ENCODE measurements at regions of chr1 and their contacts with region 1.

Region 1: GRCh38 chr1:91165033-91165654 is 143.3 kb upstream of the ZNF644 start:
- DNase-seq: peak; percentile 79 to 91 (median 84)
- ATAC-seq: peak; percentile 99
- H3K4me3 ChIP-seq: no peak overlapping the region
- H3K27ac ChIP-seq: no peak overlapping the region
- H3K4me1 ChIP-seq: no peaks in the 10 kb centered on the region
- H3K27me3 ChIP-seq: peaks cover 6 to 45% of the 10 kb centered on the region in 2 experiments
- CTCF ChIP-seq: peak; percentile 92 to 95 (median 94)
- EP300 ChIP-seq: no peak
- POLR2A ChIP-seq: no peak
- RAD21 ChIP-seq: peak; percentile 84 to 91

Region 2: DNA sequence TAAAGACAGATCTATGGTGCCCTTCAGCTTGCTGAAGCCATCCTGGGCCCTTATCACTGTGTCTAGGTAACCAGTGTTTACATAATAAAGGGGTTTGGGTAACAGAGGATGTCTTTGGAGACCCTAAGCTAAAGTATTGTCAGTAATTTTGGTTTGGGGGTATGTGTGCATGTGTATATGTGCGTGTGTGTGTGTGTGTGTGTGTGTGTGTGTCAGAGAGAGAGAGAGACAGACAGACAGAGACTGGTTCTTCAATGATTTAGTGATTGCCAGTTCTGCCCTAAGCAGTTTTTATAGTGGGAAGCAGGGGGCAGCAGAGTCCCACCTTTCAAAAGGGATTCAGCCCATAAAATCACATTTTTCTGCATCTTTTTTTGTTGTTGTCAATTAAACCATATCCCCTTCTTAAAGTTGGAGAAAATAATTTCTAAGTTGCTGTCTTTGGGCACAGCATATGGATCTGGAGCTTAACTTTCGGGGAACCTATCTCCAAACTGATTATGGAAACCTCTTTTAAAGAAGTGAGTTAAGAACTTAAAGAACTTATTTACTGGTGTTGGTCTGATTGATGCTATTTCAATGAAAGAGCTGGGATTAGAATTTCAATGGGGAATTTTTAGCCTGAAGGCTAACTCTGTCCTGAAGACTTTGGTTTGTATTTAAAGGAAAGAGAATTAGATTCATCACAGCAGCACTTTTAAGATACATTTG is 1119.1 kb before region 1 on chr1:
- CTCF ChIA-PET with region 1: interaction called, 6 read pairs
- POLR2A ChIA-PET with region 1: no interaction called
- in situ Hi-C with region 1: no loop called
- intact Hi-C with region 1: loop called (anchors 10 kb)
- DNase-seq: peak; percentile 33 to 54 (median 43)
- ATAC-seq: peak; percentile 89
- H3K4me3 ChIP-seq: no peak overlapping the region
- H3K27ac ChIP-seq: no peak overlapping the region
- H3K4me1 ChIP-seq: no peaks in the 10 kb centered on the region
- H3K27me3 ChIP-seq: peaks cover 12 to 20% of the 10 kb centered on the region in 2 experiments
- CTCF ChIP-seq: peak; percentile 64 to 86 (median 78)
- EP300 ChIP-seq: no peak
- POLR2A ChIP-seq: no peak
- RAD21 ChIP-seq: peak; percentile 51 to 80

Region 3: DNA sequence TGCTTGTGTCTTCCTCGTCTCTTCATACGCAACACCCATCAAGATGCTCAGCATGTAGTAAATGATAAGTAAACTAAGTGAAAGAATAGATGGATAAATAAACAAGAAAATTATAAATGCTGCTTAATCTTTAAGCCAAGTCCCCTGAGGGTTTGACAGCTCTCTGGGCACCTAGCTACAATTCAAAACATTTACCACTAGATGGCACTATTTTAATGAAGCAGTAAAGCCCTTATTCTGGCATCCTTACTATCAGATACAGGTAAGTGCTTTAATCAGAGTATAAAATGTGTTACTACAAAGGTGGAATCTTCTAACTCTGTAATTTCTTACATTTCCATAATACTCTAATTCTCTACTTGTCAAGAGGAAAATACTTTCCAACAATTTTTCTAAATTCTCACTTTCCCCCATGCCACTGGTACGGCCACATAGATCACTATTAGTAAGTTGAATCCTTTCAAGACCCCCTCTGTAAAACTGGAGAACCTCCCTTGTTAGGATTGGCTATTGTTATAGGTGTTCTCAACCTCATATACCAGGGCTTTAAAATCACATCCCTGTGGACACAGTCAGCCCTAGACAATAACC is 585.8 kb before region 1 on chr1:
- CTCF ChIA-PET with region 1: interaction called, 3 read pairs
- POLR2A ChIA-PET with region 1: no interaction called
- in situ Hi-C with region 1: no loop called
- intact Hi-C with region 1: loop called (anchors 1 kb)
- DNase-seq: peak; percentile 46 to 61 (median 60)
- ATAC-seq: peak; percentile 84
- H3K4me3 ChIP-seq: no peak overlapping the region
- H3K27ac ChIP-seq: no peak overlapping the region
- H3K4me1 ChIP-seq: no peaks in the 10 kb centered on the region
- H3K27me3 ChIP-seq: no peaks in the 10 kb centered on the region; a peak in 1 of 5 replicates
- CTCF ChIP-seq: peak; percentile 47 to 64 (median 56)
- EP300 ChIP-seq: no peak
- POLR2A ChIP-seq: no peak
- RAD21 ChIP-seq: peak; percentile 63 to 77

Region 4: GRCh38 chr1:90721210-90722194 is 443.6 kb before region 1 on chr1:
- CTCF ChIA-PET with region 1: interaction called, 4 read pairs
- POLR2A ChIA-PET with region 1: no interaction called
- in situ Hi-C with region 1: loop called (anchors 10 kb)
- intact Hi-C with region 1: loop called (anchors 2 kb)
- DNase-seq: peak; percentile 65 to 83 (median 70)
- ATAC-seq: peak; percentile 87
- H3K4me3 ChIP-seq: no peak overlapping the region
- H3K27ac ChIP-seq: no peak overlapping the region
- H3K4me1 ChIP-seq: peaks cover 0 to 32% of the 10 kb centered on the region in 2 experiments; a peak in 3 of 5 replicates
- H3K27me3 ChIP-seq: peaks cover 6 to 7% of the 10 kb centered on the region in 2 experiments; a peak in 3 of 5 replicates
- CTCF ChIP-seq: peak; percentile 82 to 94 (median 93)
- EP300 ChIP-seq: no peak
- POLR2A ChIP-seq: no peak
- RAD21 ChIP-seq: peak; percentile 89

Region 5: DNA sequence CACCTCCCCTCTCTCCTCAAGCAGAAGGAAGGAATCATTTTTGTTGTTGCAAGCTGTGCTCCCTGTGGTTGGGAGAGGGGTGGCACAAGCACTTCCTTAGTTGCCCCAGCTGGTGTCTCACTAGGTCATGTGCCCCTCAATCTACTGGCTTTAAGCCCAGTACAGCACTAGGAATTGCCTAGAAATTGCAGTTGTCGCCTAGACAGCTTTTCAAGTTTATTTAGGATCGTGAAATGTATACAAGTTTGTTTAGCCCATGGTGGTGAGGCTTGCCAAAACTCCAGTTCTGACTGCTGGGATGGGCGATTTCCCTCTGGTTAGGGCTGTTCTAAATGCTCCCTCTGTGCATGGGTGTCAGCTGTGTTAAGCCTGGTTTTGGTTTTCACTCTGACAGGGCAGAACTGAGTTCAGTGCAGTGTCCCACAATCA is 16.5 kb before region 1 on chr1:
- CTCF ChIA-PET with region 1: no interaction called
- POLR2A ChIA-PET with region 1: no interaction called
- in situ Hi-C with region 1: no loop called
- intact Hi-C with region 1: no loop called
- DNase-seq: no peak
- ATAC-seq: no peak
- H3K4me3 ChIP-seq: no peak overlapping the region
- H3K27ac ChIP-seq: no peak overlapping the region
- H3K4me1 ChIP-seq: no peaks in the 10 kb centered on the region
- H3K27me3 ChIP-seq: peaks cover 0 to 4% of the 10 kb centered on the region in 2 experiments; a peak in 2 of 5 replicates
- CTCF ChIP-seq: no peak
- EP300 ChIP-seq: no peak
- POLR2A ChIP-seq: no peak
- RAD21 ChIP-seq: no peak

Region 6: DNA sequence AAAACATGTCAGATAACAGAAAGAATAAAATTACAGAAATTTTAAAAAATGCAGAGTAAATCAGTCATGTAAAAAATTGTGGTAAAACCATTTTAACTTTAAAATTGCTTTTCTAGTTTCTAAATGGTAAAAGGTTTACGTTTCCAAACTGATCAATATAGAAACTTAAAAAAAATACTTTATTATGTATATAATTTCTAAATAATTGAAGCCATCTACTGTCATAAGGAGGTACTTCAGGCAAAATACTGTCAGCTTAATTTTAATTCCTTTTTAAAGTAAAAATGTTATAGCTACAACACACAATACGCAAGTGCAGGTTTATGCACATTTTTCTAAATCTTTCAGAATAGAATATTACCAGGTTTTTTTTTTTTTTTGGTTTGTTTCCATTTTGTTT is 79.6 kb after region 1 on chr1:
- CTCF ChIA-PET with region 1: no interaction called
- POLR2A ChIA-PET with region 1: no interaction called
- in situ Hi-C with region 1: no loop called
- intact Hi-C with region 1: no loop called
- DNase-seq: no peak
- ATAC-seq: no peak
- H3K4me3 ChIP-seq: no peak overlapping the region
- H3K27ac ChIP-seq: no peak overlapping the region
- H3K4me1 ChIP-seq: no peaks in the 10 kb centered on the region
- H3K27me3 ChIP-seq: no peaks in the 10 kb centered on the region
- CTCF ChIP-seq: no peak
- EP300 ChIP-seq: no peak
- POLR2A ChIP-seq: no peak
- RAD21 ChIP-seq: no peak

Region 7: GRCh38 chr1:91282695-91283420 is 117.7 kb after region 1 on chr1:
- CTCF ChIA-PET with region 1: interaction called, 29 read pairs
- POLR2A ChIA-PET with region 1: interaction called, 3 read pairs
- in situ Hi-C with region 1: loop called (anchors 5 kb)
- intact Hi-C with region 1: loop called (anchors 1 kb)
- DNase-seq: peak; percentile 59 to 79 (median 62)
- ATAC-seq: peak; percentile 84
- H3K4me3 ChIP-seq: no peak overlapping the region
- H3K27ac ChIP-seq: no peak overlapping the region
- H3K4me1 ChIP-seq: peaks cover 0 to 5% of the 10 kb centered on the region in 2 experiments; a peak in 2 of 5 replicates
- H3K27me3 ChIP-seq: no peaks in the 10 kb centered on the region
- CTCF ChIP-seq: peak; percentile 70 to 88 (median 79)
- EP300 ChIP-seq: no peak
- POLR2A ChIP-seq: no peak
- RAD21 ChIP-seq: peak; percentile 91 to 92

Region 8: GRCh38 chr1:91500756-91501522 is 335.8 kb after region 1 on chr1 and contains the start of gene CDC7:
- CTCF ChIA-PET with region 1: interaction called, 3 read pairs
- POLR2A ChIA-PET with region 1: no interaction called
- in situ Hi-C with region 1: no loop called
- intact Hi-C with region 1: loop called (anchors 5 kb)
- DNase-seq: peak; percentile 95 to 97 (median 96)
- ATAC-seq: peak; percentile 83
- H3K4me3 ChIP-seq: peak within 1 kb of the TSS; percentile 56
- H3K27ac ChIP-seq: peak within 1 kb of the TSS; percentile 97
- H3K4me1 ChIP-seq: peaks cover 0 to 43% of the 10 kb centered on the region in 2 experiments
- H3K27me3 ChIP-seq: no peaks in the 10 kb centered on the region
- CTCF ChIP-seq: peak; percentile 51 to 59 (median 55); a peak in 5 of 6 replicates
- EP300 ChIP-seq: peak; percentile 2; the same call in 1 of the 2 replicates
- POLR2A ChIP-seq: peak; percentile 92
- RAD21 ChIP-seq: peak; percentile 24 to 28
- polyA plus RNA-seq, gene CDC7: 22.3 to 66.8 TPM

Region 9: DNA sequence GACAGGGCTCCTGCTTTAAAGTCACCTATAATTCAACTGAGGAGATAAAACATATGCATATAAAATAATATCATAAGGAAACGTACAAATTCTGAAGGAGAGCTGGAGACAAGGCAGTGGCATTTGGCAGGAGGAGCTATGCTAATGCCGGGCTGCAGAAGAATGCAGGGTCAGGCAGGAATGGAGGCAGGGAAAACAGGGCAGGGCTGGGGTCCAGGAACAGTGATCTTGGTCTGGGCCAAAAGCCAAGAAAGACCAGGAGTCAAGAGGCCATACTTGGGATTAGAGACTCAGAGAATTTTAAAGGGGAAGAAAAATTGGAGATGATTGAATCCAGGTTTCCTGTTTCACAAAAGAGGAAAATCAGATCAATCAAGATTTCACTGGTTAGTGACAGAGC is 764.1 kb after region 1 on chr1:
- CTCF ChIA-PET with region 1: interaction called, 3 read pairs
- POLR2A ChIA-PET with region 1: no interaction called
- in situ Hi-C with region 1: loop called (anchors 25 kb)
- intact Hi-C with region 1: loop called (anchors 10 kb)
- DNase-seq: no peak
- ATAC-seq: no peak
- H3K4me3 ChIP-seq: no peak overlapping the region
- H3K27ac ChIP-seq: no peak overlapping the region
- H3K4me1 ChIP-seq: no peaks in the 10 kb centered on the region
- H3K27me3 ChIP-seq: no peaks in the 10 kb centered on the region
- CTCF ChIP-seq: no peak
- EP300 ChIP-seq: no peak
- POLR2A ChIP-seq: no peak
- RAD21 ChIP-seq: no peak

Measured in K562 (cell line).